Endothelial cell of umbilical vein (primary cell): ENCODE measurements at regions of chr2 and their contacts with region 1.

Region 1: DNA sequence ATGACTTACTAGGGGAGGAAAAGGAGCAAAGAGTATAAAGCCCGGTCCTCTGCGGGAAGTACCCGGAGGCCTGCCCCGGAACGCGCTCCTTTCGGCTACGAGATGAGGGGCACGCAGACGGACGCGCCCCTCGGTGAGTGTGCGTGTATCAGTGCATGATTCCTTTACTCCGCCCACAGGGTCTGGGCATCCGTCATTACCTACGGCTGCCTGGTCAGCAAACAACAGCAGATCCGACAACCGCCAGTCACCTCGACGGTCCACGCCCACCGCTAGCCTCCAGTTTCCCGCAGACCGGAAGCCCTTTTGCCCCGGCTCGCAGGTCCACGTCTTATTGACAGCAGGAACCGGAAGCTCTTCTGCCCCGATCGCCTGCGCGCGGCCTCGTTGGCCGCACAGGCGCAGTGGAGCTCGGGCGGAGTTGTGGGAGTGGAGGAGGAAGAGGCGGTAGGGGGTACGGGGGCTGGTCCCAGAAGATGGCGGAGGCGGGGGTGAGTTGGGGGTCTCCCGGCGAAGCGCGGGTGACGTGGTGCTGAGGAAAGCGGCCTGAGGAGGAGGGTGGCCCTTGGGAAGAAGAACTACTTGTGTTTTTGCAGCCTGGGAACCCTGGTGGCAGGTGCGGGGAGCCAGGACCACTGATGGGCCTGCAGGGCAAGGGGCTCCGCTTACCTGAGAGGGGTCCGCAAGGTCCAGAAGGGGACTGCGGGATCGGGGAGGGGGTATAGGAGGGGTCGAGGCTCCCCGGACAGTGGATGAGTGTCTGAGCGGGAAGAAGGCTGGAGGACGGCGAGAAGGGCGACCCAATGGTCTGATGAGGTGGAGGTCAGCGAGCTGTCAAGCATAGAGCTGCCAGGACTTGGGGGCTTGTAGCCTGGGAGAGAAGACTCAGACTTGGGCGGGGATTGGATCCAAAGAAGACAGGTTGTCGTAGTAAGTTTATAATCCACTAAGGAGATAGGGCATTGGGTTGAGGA is at the start of gene INSIG2:
- DNase-seq: peak; percentile 89
- H3K4me3 ChIP-seq: peak within 1 kb of the TSS; percentile 69 to 94 (median 93)
- H3K27ac ChIP-seq: peak within 1 kb of the TSS; percentile 78
- H3K4me1 ChIP-seq: peaks cover 20% of the 10 kb centered on the region
- H3K27me3 ChIP-seq: peaks cover 17 to 22% of the 10 kb centered on the region in 2 experiments
- CTCF ChIP-seq: no peak
- POLR2A ChIP-seq: peak; percentile 40
- total RNA-seq, gene INSIG2: 19.7 and 26.9 TPM in 2 replicates

Region 2: GRCh38 chr2:118013724-118014491 is 74.4 kb before region 1 on chr2 and contains the start of gene CCDC93:
- CTCF ChIA-PET with region 1: interaction called, 3 read pairs
- POLR2A ChIA-PET with region 1: no interaction called
- dilution Hi-C with region 1: no loop called
- intact Hi-C with region 1: loop called (anchors 1 kb)
- DNase-seq: peak; percentile 89
- H3K4me3 ChIP-seq: peak within 1 kb of the TSS; percentile 89 to 97 (median 95)
- H3K27ac ChIP-seq: peak within 1 kb of the TSS; percentile 80
- H3K4me1 ChIP-seq: peaks cover 14% of the 10 kb centered on the region
- H3K27me3 ChIP-seq: peaks cover 2 to 3% of the 10 kb centered on the region in 2 experiments
- CTCF ChIP-seq: no peak
- POLR2A ChIP-seq: peak; percentile 71
- total RNA-seq, gene CCDC93: 29.3 and 35.1 TPM in 2 replicates

Region 3: GRCh38 chr2:118103951-118104940 is 15.9 kb after region 1 on chr2:
- CTCF ChIA-PET with region 1: interaction called, 5 read pairs
- POLR2A ChIA-PET with region 1: no interaction called
- dilution Hi-C with region 1: no loop called
- intact Hi-C with region 1: loop called (anchors 1 kb)
- DNase-seq: no peak
- H3K4me3 ChIP-seq: no peak overlapping the region
- H3K27ac ChIP-seq: no peak overlapping the region
- H3K4me1 ChIP-seq: no peaks in the 10 kb centered on the region
- H3K27me3 ChIP-seq: no peaks in the 10 kb centered on the region
- CTCF ChIP-seq: no peak
- POLR2A ChIP-seq: no peak

Region 4: GRCh38 chr2:118112771-118113334 is 24.5 kb after region 1 on chr2:
- CTCF ChIA-PET with region 1: interaction called, 6 read pairs
- POLR2A ChIA-PET with region 1: no interaction called
- dilution Hi-C with region 1: no loop called
- intact Hi-C with region 1: loop called (anchors 1 kb)
- DNase-seq: peak; percentile 93
- H3K4me3 ChIP-seq: no peak overlapping the region
- H3K27ac ChIP-seq: peak overlapping the region; percentile 91
- H3K4me1 ChIP-seq: peaks cover 20% of the 10 kb centered on the region
- H3K27me3 ChIP-seq: no peaks in the 10 kb centered on the region
- CTCF ChIP-seq: no peak
- POLR2A ChIP-seq: peak; percentile 79

Region 5: DNA sequence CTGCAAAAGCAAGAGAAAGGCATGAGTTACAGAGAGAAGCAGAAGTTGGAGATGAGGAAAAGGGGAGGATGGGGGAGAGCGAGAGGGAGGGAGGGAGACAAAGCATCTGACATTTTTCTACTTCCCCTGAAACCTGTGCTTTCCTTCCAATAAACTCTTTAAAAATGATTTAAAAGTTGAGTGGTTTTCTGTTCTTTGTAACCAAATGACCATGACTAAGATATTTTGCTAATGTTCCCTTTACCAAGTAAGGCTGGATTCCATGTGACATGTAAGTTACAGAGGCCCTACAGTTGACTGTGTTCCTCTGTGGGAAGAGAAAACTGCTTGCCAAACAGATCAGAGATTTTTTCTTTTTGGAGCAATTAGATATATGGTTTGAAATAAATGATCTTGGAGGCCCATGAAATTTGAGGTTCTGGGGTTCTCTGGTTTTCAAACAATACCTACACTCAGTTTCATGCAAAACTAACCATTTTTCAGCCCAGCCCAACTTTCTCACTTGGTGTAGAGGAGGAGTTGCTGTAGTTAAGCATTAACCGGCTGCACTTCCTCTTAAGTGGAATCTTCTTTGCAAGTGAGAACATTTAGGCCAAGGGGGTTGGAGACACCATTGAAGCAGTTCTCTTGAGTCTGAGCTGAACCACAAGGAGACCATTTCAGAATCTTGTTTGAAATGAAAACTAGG is 34.4 kb after region 1 on chr2:
- CTCF ChIA-PET with region 1: interaction called, 8 read pairs
- POLR2A ChIA-PET with region 1: no interaction called
- dilution Hi-C with region 1: no loop called
- intact Hi-C with region 1: loop called (anchors 1 kb)
- DNase-seq: no peak
- H3K4me3 ChIP-seq: no peak overlapping the region
- H3K27ac ChIP-seq: peak overlapping the region; percentile 62
- H3K4me1 ChIP-seq: peaks cover 28% of the 10 kb centered on the region
- H3K27me3 ChIP-seq: no peaks in the 10 kb centered on the region
- CTCF ChIP-seq: no peak
- POLR2A ChIP-seq: no peak

Region 6: GRCh38 chr2:118186110-118186857 is 97.9 kb after region 1 on chr2:
- CTCF ChIA-PET with region 1: interaction called, 3 read pairs
- POLR2A ChIA-PET with region 1: no interaction called
- dilution Hi-C with region 1: no loop called
- intact Hi-C with region 1: loop called (anchors 1 kb)
- DNase-seq: peak; percentile 80
- H3K4me3 ChIP-seq: peak overlapping the region; percentile 51 to 76 (median 60)
- H3K27ac ChIP-seq: peak overlapping the region; percentile 46
- H3K4me1 ChIP-seq: peaks cover 3% of the 10 kb centered on the region
- H3K27me3 ChIP-seq: peaks cover 2 to 13% of the 10 kb centered on the region in 2 experiments
- CTCF ChIP-seq: peak in 1 of 2 donors; percentile 11
- POLR2A ChIP-seq: peak; percentile 77